ENCODE measurements at regions of chr7 and their contacts with region 1.

Region 1: DNA sequence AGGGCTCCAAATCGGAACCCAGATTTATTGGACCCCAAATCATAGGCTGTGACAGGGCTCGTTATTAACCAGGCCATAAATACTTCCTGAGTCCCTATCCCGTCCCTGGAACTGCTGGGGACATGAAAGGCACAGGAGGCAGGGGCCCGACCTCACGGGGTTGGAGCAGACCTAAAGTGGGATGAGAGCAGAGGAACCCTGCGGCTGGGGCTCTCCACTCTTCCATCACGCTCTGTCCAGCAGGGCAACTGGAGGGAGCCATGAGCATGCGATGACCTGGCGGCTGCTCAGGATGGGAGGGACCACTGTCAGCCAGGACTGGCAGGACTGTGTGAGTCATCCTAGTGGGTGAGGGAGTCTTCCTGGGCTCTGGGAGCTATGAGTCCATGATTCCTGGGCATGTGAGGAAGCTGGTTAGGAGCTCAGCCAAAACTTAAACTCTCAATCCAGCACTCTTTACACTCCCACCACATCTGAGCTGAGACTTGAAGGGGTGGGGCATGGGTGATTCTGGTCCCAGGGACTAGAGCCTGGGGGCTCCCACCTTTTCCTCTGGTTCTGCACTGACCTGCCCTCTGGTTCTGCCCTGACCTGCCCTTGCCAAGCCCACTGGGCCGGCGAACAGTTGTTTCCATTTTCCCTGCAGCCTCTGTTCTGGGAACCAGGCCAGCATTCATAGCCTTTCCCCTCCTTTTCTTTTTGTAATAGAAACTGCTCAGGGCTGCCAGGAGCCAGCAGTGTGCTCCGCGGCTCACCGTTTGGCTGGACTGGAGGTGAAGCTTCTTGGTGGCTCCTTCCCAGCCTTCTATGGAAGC is 47.1 kb downstream of the SYPL1 start:
- DNase-seq: no peak
- ATAC-seq: no peak
- H3K4me3 ChIP-seq: no peak overlapping the region
- H3K4me3 Mint-ChIP-seq: no peak overlapping the region
- H3K27ac ChIP-seq: no peak overlapping the region
- H3K27ac Mint-ChIP-seq: no peak overlapping the region
- H3K4me1 ChIP-seq: peaks cover 3% of the 10 kb centered on the region
- H3K4me1 Mint-ChIP-seq: peaks cover 23% of the 10 kb centered on the region
- H3K27me3 ChIP-seq: no peaks in the 10 kb centered on the region
- H3K27me3 Mint-ChIP-seq: no peaks in the 10 kb centered on the region
- CTCF ChIP-seq: no peak

Region 2: GRCh38 chr7:105664816-105665525 is 400.0 kb before region 1 on chr7:
- CTCF ChIA-PET with region 1: no interaction called
- POLR2A ChIA-PET with region 1: no interaction called
- intact Hi-C with region 1: no loop called
- DNase-seq: no peak
- ATAC-seq: no peak
- H3K4me3 ChIP-seq: no peak overlapping the region
- H3K4me3 Mint-ChIP-seq: no peak overlapping the region
- H3K27ac ChIP-seq: no peak overlapping the region
- H3K27ac Mint-ChIP-seq: no peak overlapping the region
- H3K4me1 ChIP-seq: peaks cover 5% of the 10 kb centered on the region
- H3K4me1 Mint-ChIP-seq: peaks cover 3% of the 10 kb centered on the region
- H3K27me3 ChIP-seq: no peaks in the 10 kb centered on the region
- H3K27me3 Mint-ChIP-seq: no peaks in the 10 kb centered on the region
- CTCF ChIP-seq: no peak

Region 3: GRCh38 chr7:106100863-106101629 is 36.1 kb after region 1 on chr7:
- CTCF ChIA-PET with region 1: no interaction called
- POLR2A ChIA-PET with region 1: no interaction called
- intact Hi-C with region 1: loop called in 1 of 2 experiments (anchors 5 kb)
- DNase-seq: no peak
- ATAC-seq: no peak
- H3K4me3 ChIP-seq: no peak overlapping the region
- H3K4me3 Mint-ChIP-seq: no peak overlapping the region
- H3K27ac ChIP-seq: no peak overlapping the region
- H3K27ac Mint-ChIP-seq: peak overlapping the region; percentile 2
- H3K4me1 ChIP-seq: peaks cover 5% of the 10 kb centered on the region
- H3K4me1 Mint-ChIP-seq: peaks cover 66% of the 10 kb centered on the region
- H3K27me3 ChIP-seq: no peaks in the 10 kb centered on the region
- H3K27me3 Mint-ChIP-seq: no peaks in the 10 kb centered on the region
- CTCF ChIP-seq: no peak

Measured in CD4-positive, alpha-beta T cell (primary cell).